CD8-positive, alpha-beta T cell (primary cell): ENCODE measurements at regions of chr1 and their contacts with region 1.

Region 1: GRCh38 chr1:6026095-6026809 is 19.4 kb upstream of the KCNAB2 start:
- DNase-seq: peak; percentile 87 to 98 (median 94)
- ATAC-seq: peak; percentile 73
- H3K4me3 ChIP-seq: peak overlapping the region; percentile 76 to 93
- H3K4me3 Mint-ChIP-seq: peak overlapping the region; percentile 90
- H3K27ac ChIP-seq: peak overlapping the region; percentile 85 to 94
- H3K27ac Mint-ChIP-seq: peak overlapping the region; percentile 99
- H3K4me1 ChIP-seq: peaks cover 54% of the 10 kb centered on the region
- H3K4me1 Mint-ChIP-seq: peaks cover 55% of the 10 kb centered on the region
- H3K27me3 ChIP-seq: no peaks in the 10 kb centered on the region
- H3K27me3 Mint-ChIP-seq: no peaks in the 10 kb centered on the region
- CTCF ChIP-seq: no peak

Region 2: GRCh38 chr1:5975133-5975880 is 50.9 kb before region 1 on chr1:
- CTCF ChIA-PET with region 1: no interaction called
- POLR2A ChIA-PET with region 1: no interaction called
- intact Hi-C with region 1: no loop called
- DNase-seq: peak; percentile 21 to 65 (median 41)
- ATAC-seq: peak; percentile 69
- H3K4me3 ChIP-seq: no peak overlapping the region
- H3K4me3 Mint-ChIP-seq: no peak overlapping the region
- H3K27ac ChIP-seq: no peak overlapping the region
- H3K27ac Mint-ChIP-seq: no peak overlapping the region
- H3K4me1 ChIP-seq: no peaks in the 10 kb centered on the region
- H3K4me1 Mint-ChIP-seq: peaks cover 4% of the 10 kb centered on the region
- H3K27me3 ChIP-seq: no peaks in the 10 kb centered on the region
- H3K27me3 Mint-ChIP-seq: no peaks in the 10 kb centered on the region
- CTCF ChIP-seq: peak; percentile 37

Region 3: GRCh38 chr1:5992026-5992813 is 34.0 kb before region 1 on chr1 and contains the start of gene NPHP4:
- CTCF ChIA-PET with region 1: interaction called, 11 read pairs
- POLR2A ChIA-PET with region 1: interaction called, 32 read pairs
- intact Hi-C with region 1: loop called (anchors 1 kb)
- DNase-seq: peak; percentile 98 to 100 (median 99)
- ATAC-seq: peak; percentile 86
- H3K4me3 ChIP-seq: peak within 1 kb of the TSS; percentile 64 to 87
- H3K4me3 Mint-ChIP-seq: peak within 1 kb of the TSS; percentile 96
- H3K27ac ChIP-seq: peak within 1 kb of the TSS; percentile 90 to 99
- H3K27ac Mint-ChIP-seq: peak within 1 kb of the TSS; percentile 93
- H3K4me1 ChIP-seq: peaks cover 35% of the 10 kb centered on the region
- H3K4me1 Mint-ChIP-seq: peaks cover 33% of the 10 kb centered on the region
- H3K27me3 ChIP-seq: no peaks in the 10 kb centered on the region
- H3K27me3 Mint-ChIP-seq: no peaks in the 10 kb centered on the region
- CTCF ChIP-seq: no peak
- total RNA-seq, gene NPHP4: 3.1 to 3.7 TPM